ENCODE measurements at regions of chr5 and their contacts with region 1.

Region 1: GRCh38 chr5:30663536-30663935 is 530.0 kb upstream of the CDH6 start:
- DNase-seq: no peak
- H3K4me3 ChIP-seq: no peak overlapping the region
- CTCF ChIP-seq: no peak
- POLR2A ChIP-seq: no peak

Region 2: GRCh38 chr5:29697785-29698414 is 965.6 kb before region 1 on chr5:
- intact Hi-C with region 1: no loop called
- DNase-seq: no peak
- H3K4me3 ChIP-seq: no peak overlapping the region
- CTCF ChIP-seq: no peak
- POLR2A ChIP-seq: no peak

Region 3: DNA sequence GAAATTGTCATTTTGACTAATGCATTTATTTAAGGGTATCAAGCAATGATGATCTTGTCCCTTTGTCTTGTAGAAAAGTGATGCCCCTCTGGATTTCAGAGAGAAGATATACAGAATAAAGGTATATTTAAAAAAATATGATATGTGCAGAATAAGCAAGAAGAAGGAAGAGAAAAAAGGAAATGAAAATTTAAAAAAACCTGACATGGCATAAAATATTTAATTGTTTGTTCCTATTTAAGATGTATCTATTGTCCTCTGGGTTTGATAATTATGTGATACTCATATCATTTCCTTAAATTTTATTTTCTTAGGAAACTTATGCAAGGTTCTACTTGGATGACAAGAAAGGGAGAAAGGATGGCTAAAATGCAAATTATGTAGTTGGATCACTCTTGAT is 453.8 kb before region 1 on chr5:
- intact Hi-C with region 1: loop called (anchors 10 kb)
- DNase-seq: no peak
- H3K4me3 ChIP-seq: no peak overlapping the region
- CTCF ChIP-seq: no peak
- POLR2A ChIP-seq: no peak